H1 (cell line): ENCODE measurements at regions of chr10 and their contacts with region 1.

Region 1: DNA sequence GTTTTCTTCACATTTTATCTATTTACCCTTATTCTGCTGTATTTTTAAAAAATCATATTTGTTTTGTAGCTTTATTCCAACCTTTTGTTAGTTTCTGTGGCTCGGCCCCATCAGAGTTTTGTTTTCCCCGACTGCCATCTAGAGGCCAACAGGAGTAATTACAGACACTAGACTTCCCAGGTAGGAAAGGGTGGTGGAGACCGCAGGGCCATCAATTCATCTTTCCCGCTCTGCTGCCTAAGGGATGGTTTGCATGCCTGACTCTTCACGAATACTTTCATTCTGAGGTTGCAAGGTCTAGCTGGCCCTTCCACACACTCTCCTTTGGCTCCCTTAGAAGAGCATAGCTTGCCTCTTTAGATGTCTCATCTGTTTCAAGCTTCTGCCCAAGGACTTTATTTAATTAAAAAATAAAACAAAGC is 38.3 kb downstream of the LYZL2 start:
- DNase-seq: no peak
- H3K4me3 ChIP-seq: no peak overlapping the region
- H3K27ac ChIP-seq: no peak overlapping the region
- H3K4me1 ChIP-seq: peaks cover 0 to 5% (median 1%) of the 10 kb centered on the region in 4 experiments; a peak in 4 of 7 replicates
- H3K27me3 ChIP-seq: peaks cover 7 to 34% (median 15%) of the 10 kb centered on the region in 4 experiments
- CTCF ChIP-seq: peak; percentile 20 to 73 (median 66)
- EP300 ChIP-seq: no peak
- POLR2A ChIP-seq: no peak
- RAD21 ChIP-seq: peak; percentile 79 to 87

Region 2: DNA sequence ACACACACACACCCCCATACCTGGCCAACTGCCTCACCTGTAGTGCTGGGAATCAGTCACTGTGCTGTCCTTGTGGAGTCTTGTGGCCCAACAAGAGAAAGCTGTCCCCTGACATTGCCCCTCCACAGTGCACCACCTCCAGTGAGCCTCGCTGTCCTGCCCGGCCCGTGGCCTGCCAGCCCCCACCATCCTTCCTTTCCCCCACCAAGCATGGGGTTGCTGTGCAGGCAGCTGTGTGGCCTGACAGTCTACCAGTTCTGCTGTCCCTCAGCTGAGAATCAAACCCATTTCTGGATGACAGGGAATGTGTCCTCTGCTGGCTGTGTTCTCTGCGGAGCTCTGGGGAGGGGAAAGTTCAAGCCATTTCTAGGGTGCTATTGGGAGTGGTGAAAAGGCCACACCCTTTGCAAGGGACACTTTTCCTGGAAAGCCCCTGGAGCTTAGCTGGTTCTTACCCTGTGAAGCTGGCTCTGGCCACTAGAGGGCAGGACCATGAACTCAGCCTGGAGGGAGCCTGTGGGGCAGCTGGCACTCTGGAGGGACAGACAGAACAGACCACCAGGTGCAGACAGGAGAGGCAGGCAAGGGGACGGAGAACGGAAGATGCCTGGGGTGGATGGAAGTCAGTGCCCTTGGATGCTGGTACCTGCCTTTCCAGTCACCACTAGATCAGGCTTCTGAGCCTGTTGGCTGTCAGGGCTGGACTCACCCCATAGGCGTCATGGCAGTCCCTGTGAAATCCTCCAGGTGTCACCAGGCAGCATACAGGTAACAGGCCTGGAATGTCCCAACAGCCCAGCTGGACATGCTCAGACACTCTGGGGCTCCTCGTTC is 231.7 kb before region 1 on chr10:
- CTCF ChIA-PET with region 1: interaction called, 28 read pairs
- POLR2A ChIA-PET with region 1: no interaction called
- DNase-seq: peak; percentile 71 to 92
- H3K4me3 ChIP-seq: 0 out of 8 replicates have a peak overlapping the region, but pooled peaks of 1 of the 4 experiments have one; percentile 5
- H3K27ac ChIP-seq: no peak overlapping the region
- H3K4me1 ChIP-seq: peaks cover 0 to 2% (median 0%) of the 10 kb centered on the region in 4 experiments; a peak in 4 of 7 replicates
- H3K27me3 ChIP-seq: no peaks in the 10 kb centered on the region
- CTCF ChIP-seq: peak; percentile 80 to 84 (median 84)
- EP300 ChIP-seq: no peak
- POLR2A ChIP-seq: no peak
- RAD21 ChIP-seq: peak; percentile 27 to 40

Region 3: GRCh38 chr10:30413996-30414576 is 177.2 kb before region 1 on chr10:
- CTCF ChIA-PET with region 1: interaction called, 13 read pairs
- POLR2A ChIA-PET with region 1: interaction called, 3 read pairs
- DNase-seq: no peak
- H3K4me3 ChIP-seq: no peak overlapping the region
- H3K27ac ChIP-seq: no peak overlapping the region
- H3K4me1 ChIP-seq: no peaks in the 10 kb centered on the region
- H3K27me3 ChIP-seq: no peaks in the 10 kb centered on the region
- CTCF ChIP-seq: peak in 2 of 3 experiments; percentile 59 to 79; a peak in 2 of 4 replicates
- EP300 ChIP-seq: no peak
- POLR2A ChIP-seq: no peak
- RAD21 ChIP-seq: peak; percentile 74 to 76

Region 4: DNA sequence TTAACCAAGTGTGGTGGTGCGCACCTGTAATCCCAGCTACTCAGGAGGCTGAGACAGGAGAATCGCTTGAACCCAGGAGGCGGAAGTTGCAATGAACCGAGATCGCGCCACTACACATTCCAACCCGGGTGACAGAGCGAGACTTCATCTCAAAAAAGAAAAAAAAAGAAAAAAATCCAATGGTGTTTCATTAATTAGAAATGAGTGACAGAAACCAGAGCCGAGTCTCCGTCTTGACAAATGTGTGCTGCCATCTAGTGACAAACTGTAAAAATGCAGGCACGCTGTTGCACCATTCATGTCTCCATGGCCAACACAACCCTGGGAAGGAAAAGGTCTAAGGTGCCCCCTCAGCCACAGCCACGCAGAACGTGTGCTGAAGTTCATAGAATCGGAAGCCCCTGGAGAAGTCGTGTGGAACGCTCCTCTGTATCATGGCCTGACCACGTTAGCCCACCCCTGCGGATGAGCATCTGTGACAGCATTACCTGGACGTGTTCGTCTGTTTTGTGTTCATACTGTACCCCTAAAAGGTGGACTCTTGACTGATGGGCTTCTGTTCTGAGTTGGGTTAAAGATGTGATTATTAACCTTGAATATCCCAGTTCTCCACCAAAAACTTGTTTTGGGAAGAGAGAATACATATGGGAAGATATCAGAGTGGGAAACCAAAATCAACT is 56.7 kb before region 1 on chr10:
- CTCF ChIA-PET with region 1: interaction called, 13 read pairs
- POLR2A ChIA-PET with region 1: no interaction called
- DNase-seq: peak in 1 of 2 experiments; percentile 76
- H3K4me3 ChIP-seq: no peak overlapping the region
- H3K27ac ChIP-seq: no peak overlapping the region
- H3K4me1 ChIP-seq: peaks cover 0 to 9% (median under 1%) of the 10 kb centered on the region in 4 experiments; a peak in 2 of 7 replicates
- H3K27me3 ChIP-seq: no peaks in the 10 kb centered on the region
- CTCF ChIP-seq: peak; percentile 63 to 84 (median 71)
- EP300 ChIP-seq: no peak
- POLR2A ChIP-seq: no peak
- RAD21 ChIP-seq: peak; percentile 87 to 88

Region 5: DNA sequence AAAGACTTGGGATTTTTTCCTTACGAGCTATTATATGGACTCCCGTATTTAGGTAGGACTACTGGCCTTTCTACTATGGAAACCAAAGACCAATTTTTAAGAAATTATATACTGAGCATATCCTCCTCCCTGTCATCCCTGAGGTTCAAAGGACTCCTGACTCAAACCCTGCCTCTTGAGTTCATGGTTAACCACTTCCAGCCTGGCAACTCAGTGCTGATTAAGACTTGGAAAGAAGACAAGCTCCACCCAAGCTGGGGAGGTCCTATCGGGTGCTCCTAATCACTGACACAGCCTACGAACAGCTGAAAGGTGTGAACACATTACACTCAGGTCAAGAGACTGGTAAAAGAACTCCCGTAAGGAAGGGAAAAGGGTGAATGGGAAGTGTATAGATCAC is 28.5 kb before region 1 on chr10:
- CTCF ChIA-PET with region 1: interaction called, 14 read pairs
- POLR2A ChIA-PET with region 1: no interaction called
- DNase-seq: no peak
- H3K4me3 ChIP-seq: no peak overlapping the region
- H3K27ac ChIP-seq: no peak overlapping the region
- H3K4me1 ChIP-seq: peaks cover 0 to 3% (median 0%) of the 10 kb centered on the region in 4 experiments; a peak in 2 of 7 replicates
- H3K27me3 ChIP-seq: no peaks in the 10 kb centered on the region
- CTCF ChIP-seq: no peak
- EP300 ChIP-seq: no peak
- POLR2A ChIP-seq: no peak
- RAD21 ChIP-seq: no peak

Region 6: GRCh38 chr10:30639946-30640786 is 48.9 kb after region 1 on chr10:
- CTCF ChIA-PET with region 1: interaction called, 11 read pairs
- POLR2A ChIA-PET with region 1: no interaction called
- DNase-seq: no peak
- H3K4me3 ChIP-seq: no peak overlapping the region
- H3K27ac ChIP-seq: no peak overlapping the region
- H3K4me1 ChIP-seq: peaks cover 0 to 7% (median 3%) of the 10 kb centered on the region in 4 experiments; a peak in 3 of 7 replicates
- H3K27me3 ChIP-seq: no peaks in the 10 kb centered on the region
- CTCF ChIP-seq: peak in 2 of 3 experiments; percentile 66 to 77; a peak in 3 of 4 replicates
- EP300 ChIP-seq: no peak
- POLR2A ChIP-seq: no peak
- RAD21 ChIP-seq: peak; percentile 49 to 59